ENCODE measurements at regions of chr15 and their contacts with region 1.

Region 1: GRCh38 chr15:73950831-73951561 is 24.7 kb downstream of the LOXL1 start:
- DNase-seq: peak; percentile 85 to 94 (median 91)
- H3K4me3 ChIP-seq: no peak overlapping the region
- H3K27ac ChIP-seq: peak overlapping the region; percentile 25 to 30
- H3K4me1 ChIP-seq: peaks cover 1 to 64% (median 59%) of the 10 kb centered on the region in 4 experiments
- H3K27me3 ChIP-seq: no peaks in the 10 kb centered on the region

Region 2: GRCh38 chr15:73936181-73936580 is 14.8 kb before region 1 on chr15:
- CTCF ChIA-PET with region 1: interaction called, 15 read pairs
- POLR2A ChIA-PET with region 1: no interaction called
- DNase-seq: peak in 1 of 3 donors; percentile 8
- H3K4me3 ChIP-seq: no peak overlapping the region
- H3K27ac ChIP-seq: no peak overlapping the region
- H3K4me1 ChIP-seq: peaks cover 0 to 60% (median 40%) of the 10 kb centered on the region in 4 experiments
- H3K27me3 ChIP-seq: no peaks in the 10 kb centered on the region

Region 3: GRCh38 chr15:74011610-74012009 is 60.6 kb after region 1 on chr15:
- CTCF ChIA-PET with region 1: no interaction called
- POLR2A ChIA-PET with region 1: no interaction called
- DNase-seq: no peak
- H3K4me3 ChIP-seq: peak overlapping the region in 4 of 7 experiments; percentile 3 to 61 (median 46)
- H3K27ac ChIP-seq: peak overlapping the region; percentile 55
- H3K4me1 ChIP-seq: peaks cover 11 to 66% (median 40%) of the 10 kb centered on the region in 4 experiments
- H3K27me3 ChIP-seq: no peaks in the 10 kb centered on the region

Measured in common myeloid progenitor, CD34-positive (primary cell).